BJ (cell line): ENCODE measurements at regions of chr17 and their contacts with region 1.

Region 1: GRCh38 chr17:35969558-35970380 is 11.5 kb downstream of the CCL16 start:
- DNase-seq: peak; percentile 10
- H3K4me3 ChIP-seq: no peak overlapping the region
- H3K27me3 ChIP-seq: peaks cover 2% of the 10 kb centered on the region
- CTCF ChIP-seq: peak; percentile 78

Region 2: GRCh38 chr17:35918665-35919064 is 51.1 kb before region 1 on chr17:
- CTCF ChIA-PET with region 1: no interaction called
- POLR2A ChIA-PET with region 1: no interaction called
- DNase-seq: no peak
- H3K4me3 ChIP-seq: no peak overlapping the region
- H3K27me3 ChIP-seq: no peaks in the 10 kb centered on the region; the same call in 1 of the 2 replicates
- CTCF ChIP-seq: no peak

Region 3: DNA sequence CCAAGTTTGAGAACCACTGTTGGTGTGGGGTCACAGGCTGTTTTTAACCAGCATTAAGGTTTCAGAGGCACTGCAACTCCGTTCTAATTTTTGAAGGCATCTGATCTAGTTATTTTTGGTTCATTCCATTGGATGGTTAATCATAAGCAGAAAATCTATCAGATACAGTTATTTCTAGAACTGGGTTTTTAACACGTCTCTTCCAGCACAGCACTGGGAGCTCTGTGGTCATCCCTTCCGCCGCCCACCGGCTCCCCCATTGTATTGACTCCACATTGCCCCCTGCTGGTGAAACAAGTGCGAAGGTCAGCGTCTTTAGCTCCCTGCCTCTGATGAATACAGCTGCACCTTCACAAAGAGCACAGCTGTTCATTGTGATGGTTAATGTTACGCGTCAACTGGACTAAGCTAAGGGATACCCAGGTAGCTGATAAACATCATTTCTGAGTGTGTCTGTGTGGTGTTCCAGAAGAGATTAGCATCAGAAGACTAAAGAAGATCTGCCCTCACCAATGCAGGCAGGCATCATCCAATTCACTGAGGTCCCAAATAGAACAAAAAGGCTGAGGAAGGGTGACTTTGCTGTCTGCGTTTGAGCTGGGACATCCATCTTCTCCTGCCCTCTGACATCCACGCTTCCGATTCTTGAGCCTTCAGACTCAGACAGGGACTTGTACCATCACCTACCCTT is 102.8 kb after region 1 on chr17:
- CTCF ChIA-PET with region 1: interaction called, 13 read pairs
- POLR2A ChIA-PET with region 1: no interaction called
- DNase-seq: no peak
- H3K4me3 ChIP-seq: no peak overlapping the region
- H3K27me3 ChIP-seq: peaks cover 2% of the 10 kb centered on the region; the same call in 1 of the 2 replicates
- CTCF ChIP-seq: peak; percentile 51